Right cardiac atrium (tissue), 5 donors: ENCODE measurements at regions of chr13 and their contacts with region 1.

Region 1: DNA sequence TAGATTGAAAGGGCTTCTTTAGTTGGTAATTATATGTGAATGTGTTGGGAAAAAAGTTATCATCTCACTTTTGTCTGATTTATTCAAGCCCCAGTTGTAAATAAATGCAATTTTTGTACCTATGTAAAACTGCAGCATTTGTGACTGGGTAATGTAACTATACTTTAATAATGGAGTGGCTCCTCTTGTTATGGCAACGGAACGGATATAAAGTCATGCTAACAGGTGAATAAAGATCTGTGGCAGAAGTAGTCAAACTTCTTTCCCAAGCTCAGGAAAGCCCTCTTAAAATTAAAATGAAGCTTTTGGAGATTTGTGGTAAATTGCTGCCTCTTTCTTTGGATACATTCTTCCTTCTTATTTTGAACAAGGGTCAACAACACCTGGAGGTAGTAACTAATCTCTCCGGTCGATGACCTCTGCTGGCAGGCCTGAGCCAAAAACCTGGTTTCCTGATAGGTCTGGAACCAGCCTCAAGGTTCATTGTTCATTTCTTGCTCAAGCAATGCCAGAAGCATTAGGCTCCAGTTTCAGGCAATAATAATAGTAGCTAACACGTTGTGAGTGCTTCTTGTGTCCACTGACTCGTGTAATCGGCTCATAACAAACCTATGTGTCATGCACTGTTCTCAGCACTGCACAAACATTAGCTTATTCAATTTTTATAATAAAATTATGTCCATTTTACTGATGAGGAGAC is 313.4 kb upstream of the DACH1 start:
- DNase-seq: no peak
- ATAC-seq: no peak
- H3K4me3 ChIP-seq: no peak overlapping the region
- H3K27ac ChIP-seq: no peak overlapping the region
- H3K4me1 ChIP-seq: no peaks in the 10 kb centered on the region
- H3K27me3 ChIP-seq: no peaks in the 10 kb centered on the region

Region 2: DNA sequence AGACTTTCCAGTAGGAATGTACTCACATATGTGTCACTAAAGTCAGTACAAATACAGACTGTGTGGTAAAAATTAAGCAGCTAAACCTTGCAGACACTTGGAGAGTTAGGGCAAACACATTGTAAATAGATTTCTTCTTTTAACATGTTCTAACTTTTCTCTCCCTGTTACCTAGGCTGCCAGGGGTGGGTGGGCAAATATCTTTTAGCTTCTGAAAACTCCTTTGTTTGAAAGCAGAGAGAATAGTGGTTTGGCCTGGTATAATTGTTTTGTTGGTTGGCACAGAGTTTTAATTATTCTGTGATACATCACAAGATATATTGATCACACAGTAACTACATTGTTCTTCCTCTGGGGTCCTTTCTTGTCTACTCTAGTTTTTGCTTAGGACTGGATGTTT is 23.6 kb before region 1 on chr13:
- intact Hi-C with region 1: loop called in 1 of 4 experiments (anchors 2 kb)
- DNase-seq: no peak
- ATAC-seq: no peak
- H3K4me3 ChIP-seq: no peak overlapping the region
- H3K27ac ChIP-seq: no peak overlapping the region
- H3K4me1 ChIP-seq: no peaks in the 10 kb centered on the region
- H3K27me3 ChIP-seq: no peaks in the 10 kb centered on the region

Region 3: GRCh38 chr13:72368031-72368430 is 187.6 kb after region 1 on chr13:
- intact Hi-C with region 1: no loop called
- DNase-seq: no peak
- ATAC-seq: no peak
- H3K4me3 ChIP-seq: no peak overlapping the region
- H3K27ac ChIP-seq: no peak overlapping the region
- H3K4me1 ChIP-seq: no peaks in the 10 kb centered on the region
- H3K27me3 ChIP-seq: no peaks in the 10 kb centered on the region